CD8-positive, alpha-beta memory T cell (primary cell): ENCODE measurements at regions of chr6 and their contacts with region 1.

Region 1: DNA sequence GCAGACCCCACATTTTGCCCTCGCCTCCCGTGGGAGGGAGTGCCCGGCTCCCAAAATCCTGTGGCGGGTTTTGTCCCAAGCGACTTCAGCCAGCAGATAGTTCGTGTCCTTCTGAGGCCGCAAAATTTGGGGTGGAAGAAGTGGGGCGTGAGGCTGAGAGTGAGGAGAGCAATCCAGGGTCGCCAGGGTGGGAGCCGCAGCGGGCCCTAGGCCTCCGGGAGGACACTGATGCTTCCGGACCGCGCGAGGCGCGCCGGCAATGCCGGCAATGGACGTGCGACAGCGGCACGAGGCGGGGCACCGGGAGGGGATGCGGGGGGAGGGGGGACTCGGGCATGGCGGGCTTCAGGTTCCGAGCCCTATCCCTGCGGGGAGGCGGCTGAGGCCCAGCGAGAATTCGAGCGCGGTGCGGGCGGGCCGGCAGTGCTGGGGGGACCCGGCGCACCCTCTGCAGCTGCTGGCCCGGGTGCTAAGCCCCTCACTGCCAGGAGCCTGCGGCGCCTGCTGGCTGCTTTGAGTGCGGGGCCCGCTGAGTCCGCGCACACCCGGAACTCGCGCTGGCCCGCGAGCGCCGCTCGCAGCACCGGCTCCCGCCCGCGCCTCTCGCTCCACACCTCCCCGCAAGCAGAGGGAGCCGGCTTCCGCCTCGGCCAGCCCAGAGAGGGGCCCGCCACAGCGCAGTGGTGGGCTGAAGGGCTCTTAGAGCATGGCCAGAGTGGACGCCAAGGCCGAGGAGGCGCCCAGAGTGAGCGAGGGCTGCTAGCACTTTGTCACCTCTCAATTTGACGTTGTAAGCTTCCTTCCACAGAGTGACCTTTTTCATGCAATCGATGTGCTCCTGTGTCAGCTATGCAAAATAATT is 143.8 kb downstream of the LPA start:
- DNase-seq: peak; percentile 71 to 79 (median 73)
- H3K4me3 ChIP-seq: peak overlapping the region; percentile 81
- H3K4me3 Mint-ChIP-seq: peak overlapping the region; percentile 86 to 100 (median 97)
- H3K27ac ChIP-seq: peak overlapping the region; percentile 75
- H3K27ac Mint-ChIP-seq: peak overlapping the region; percentile 81 to 100 (median 96)
- H3K4me1 ChIP-seq: peaks cover 20% of the 10 kb centered on the region
- H3K4me1 Mint-ChIP-seq: peaks cover 42 to 50% (median 46%) of the 10 kb centered on the region in 3 donors
- H3K27me3 ChIP-seq: no peaks in the 10 kb centered on the region
- H3K27me3 Mint-ChIP-seq: no peaks in the 10 kb centered on the region

Region 2: DNA sequence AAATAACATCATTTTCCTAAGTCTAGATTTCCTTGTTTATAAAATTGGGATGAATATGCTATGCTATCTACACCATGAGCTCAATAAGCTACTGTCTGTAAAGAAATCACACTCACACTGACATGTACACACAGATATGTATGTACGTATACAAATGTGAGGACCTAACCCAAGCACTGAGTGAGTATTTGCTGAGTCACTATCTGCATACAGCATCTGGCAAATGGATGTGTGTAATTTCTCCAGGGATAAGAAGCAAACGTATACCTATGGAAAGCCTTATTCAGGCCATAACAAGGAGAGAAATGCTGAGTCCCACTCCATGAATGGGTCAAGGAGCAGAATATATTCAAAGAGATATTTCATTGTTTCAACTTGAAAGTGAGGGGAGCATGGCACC is 10.1 kb before region 1 on chr6:
- CTCF ChIA-PET with region 1: interaction called, 14 read pairs
- POLR2A ChIA-PET with region 1: interaction called, 6 read pairs
- DNase-seq: no peak
- H3K4me3 ChIP-seq: no peak overlapping the region
- H3K4me3 Mint-ChIP-seq: no peak overlapping the region
- H3K27ac ChIP-seq: no peak overlapping the region
- H3K27ac Mint-ChIP-seq: no peak overlapping the region
- H3K4me1 ChIP-seq: no peaks in the 10 kb centered on the region
- H3K4me1 Mint-ChIP-seq: peaks cover 0 to 6% (median 4%) of the 10 kb centered on the region in 3 donors
- H3K27me3 ChIP-seq: no peaks in the 10 kb centered on the region
- H3K27me3 Mint-ChIP-seq: peaks cover 2 to 13% of the 10 kb centered on the region in 2 donors

Region 3: GRCh38 chr6:160534050-160534696 is 13.9 kb after region 1 on chr6:
- CTCF ChIA-PET with region 1: interaction called, 83 read pairs
- POLR2A ChIA-PET with region 1: no interaction called
- DNase-seq: peak; percentile 43 to 72 (median 48)
- H3K4me3 ChIP-seq: no peak overlapping the region
- H3K4me3 Mint-ChIP-seq: no peak overlapping the region
- H3K27ac ChIP-seq: no peak overlapping the region
- H3K27ac Mint-ChIP-seq: no peak overlapping the region
- H3K4me1 ChIP-seq: peaks cover 7% of the 10 kb centered on the region
- H3K4me1 Mint-ChIP-seq: no peaks in the 10 kb centered on the region
- H3K27me3 ChIP-seq: no peaks in the 10 kb centered on the region
- H3K27me3 Mint-ChIP-seq: peaks cover 6 to 20% of the 10 kb centered on the region in 2 donors